Gastrocnemius medialis (tissue), 4 donors: ENCODE measurements at regions of chr15 and their contacts with region 1.

Region 1: GRCh38 chr15:23642413-23643044 is 5.1 kb downstream of the MAGEL2 start:
- DNase-seq: no peak
- ATAC-seq: no peak
- H3K4me3 ChIP-seq: no peak overlapping the region
- H3K27ac ChIP-seq: no peak overlapping the region
- H3K4me1 ChIP-seq: no peaks in the 10 kb centered on the region
- H3K27me3 ChIP-seq: peaks cover 0 to 4% (median 0%) of the 10 kb centered on the region in 3 donors
- CTCF ChIP-seq: peak; percentile 31 to 63 (median 50)
- POLR2A ChIP-seq: no peak

Region 2: DNA sequence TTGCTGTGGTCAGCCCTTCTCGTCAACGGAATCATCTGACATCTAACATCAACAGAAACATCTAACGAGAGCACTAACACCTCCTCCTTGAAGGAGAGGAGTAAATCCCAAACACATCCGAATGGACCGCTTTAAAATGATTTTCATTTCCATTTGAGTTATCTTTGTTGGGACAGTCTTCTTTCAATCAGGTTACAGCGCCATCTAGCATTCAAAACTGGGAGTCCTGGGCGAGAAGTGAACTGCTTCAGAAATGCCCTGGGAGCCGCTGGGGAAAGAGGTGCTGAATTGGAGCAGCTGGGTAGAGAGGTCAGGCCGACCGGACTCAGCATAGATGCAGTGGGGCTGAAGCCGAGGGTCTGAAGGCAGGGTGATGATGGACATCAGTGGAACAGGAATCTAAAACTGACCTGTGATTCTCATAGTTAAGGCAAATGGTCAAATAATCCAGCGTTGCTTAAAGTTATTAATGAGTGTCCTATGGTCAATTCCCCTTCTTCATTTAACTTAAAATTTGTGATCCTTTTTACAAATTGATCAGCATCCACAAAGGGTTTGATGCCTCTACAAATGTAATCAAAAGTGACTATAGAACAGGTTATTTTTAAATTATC is 214.6 kb after region 1 on chr15:
- in situ Hi-C with region 1: loop called (anchors 25 kb)
- intact Hi-C with region 1: no loop called
- DNase-seq: no peak
- ATAC-seq: no peak
- H3K4me3 ChIP-seq: no peak overlapping the region
- H3K27ac ChIP-seq: no peak overlapping the region
- H3K4me1 ChIP-seq: no peaks in the 10 kb centered on the region
- H3K27me3 ChIP-seq: no peaks in the 10 kb centered on the region
- CTCF ChIP-seq: peak in 1 of 5 experiments; percentile 20
- POLR2A ChIP-seq: no peak

Region 3: GRCh38 chr15:23877502-23878412 is 235.2 kb after region 1 on chr15:
- in situ Hi-C with region 1: loop called (anchors 25 kb)
- intact Hi-C with region 1: loop called (anchors 2 kb)
- DNase-seq: no peak
- ATAC-seq: no peak
- H3K4me3 ChIP-seq: no peak overlapping the region
- H3K27ac ChIP-seq: no peak overlapping the region
- H3K4me1 ChIP-seq: no peaks in the 10 kb centered on the region
- H3K27me3 ChIP-seq: no peaks in the 10 kb centered on the region
- CTCF ChIP-seq: peak in 1 of 5 experiments; percentile 39
- POLR2A ChIP-seq: no peak